HCT116 (cell line): ENCODE measurements at regions of chr1 and their contacts with region 1.

Region 1: DNA sequence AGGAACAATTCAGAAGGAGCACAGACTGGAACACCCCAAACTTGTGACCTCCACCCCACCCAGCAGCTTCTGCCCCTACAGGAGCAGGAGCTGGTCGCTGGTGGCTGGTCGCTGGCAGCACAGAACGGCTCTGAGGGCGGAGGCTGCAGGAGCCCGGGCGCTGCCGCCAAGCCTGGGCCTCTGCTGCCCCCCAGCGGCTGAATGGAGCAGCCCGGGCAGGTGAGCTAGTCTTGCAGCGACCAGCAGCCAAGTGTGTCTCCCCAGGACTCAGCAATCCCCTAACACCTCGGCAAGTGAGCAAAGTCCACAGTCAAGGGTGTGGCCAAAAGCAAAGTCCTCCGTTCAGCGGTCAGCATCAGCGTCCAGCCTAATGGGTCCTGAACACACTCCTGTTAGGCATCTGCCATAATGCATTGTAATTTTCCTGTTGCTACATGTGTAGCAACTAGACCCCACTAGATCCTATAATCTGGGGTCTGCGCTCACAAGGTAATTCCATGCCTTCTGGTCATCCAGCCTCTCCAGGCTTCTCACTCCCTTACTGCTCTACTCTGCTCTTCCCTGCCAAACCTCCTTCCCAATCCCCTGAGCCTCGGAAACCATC is 12.1 kb upstream of the GJB5 start:
- DNase-seq: peak; percentile 59
- ATAC-seq: peak; percentile 99
- H3K4me3 ChIP-seq: no peak overlapping the region
- H3K27ac ChIP-seq: no peak overlapping the region
- H3K4me1 ChIP-seq: peaks cover 3 to 13% of the 10 kb centered on the region in 2 experiments; a peak in 3 of 4 replicates
- H3K27me3 ChIP-seq: no peaks in the 10 kb centered on the region
- CTCF ChIP-seq: peak; percentile 88 to 96 (median 94)
- POLR2A ChIP-seq: no peak
- RAD21 ChIP-seq: peak; percentile 99

Region 2: DNA sequence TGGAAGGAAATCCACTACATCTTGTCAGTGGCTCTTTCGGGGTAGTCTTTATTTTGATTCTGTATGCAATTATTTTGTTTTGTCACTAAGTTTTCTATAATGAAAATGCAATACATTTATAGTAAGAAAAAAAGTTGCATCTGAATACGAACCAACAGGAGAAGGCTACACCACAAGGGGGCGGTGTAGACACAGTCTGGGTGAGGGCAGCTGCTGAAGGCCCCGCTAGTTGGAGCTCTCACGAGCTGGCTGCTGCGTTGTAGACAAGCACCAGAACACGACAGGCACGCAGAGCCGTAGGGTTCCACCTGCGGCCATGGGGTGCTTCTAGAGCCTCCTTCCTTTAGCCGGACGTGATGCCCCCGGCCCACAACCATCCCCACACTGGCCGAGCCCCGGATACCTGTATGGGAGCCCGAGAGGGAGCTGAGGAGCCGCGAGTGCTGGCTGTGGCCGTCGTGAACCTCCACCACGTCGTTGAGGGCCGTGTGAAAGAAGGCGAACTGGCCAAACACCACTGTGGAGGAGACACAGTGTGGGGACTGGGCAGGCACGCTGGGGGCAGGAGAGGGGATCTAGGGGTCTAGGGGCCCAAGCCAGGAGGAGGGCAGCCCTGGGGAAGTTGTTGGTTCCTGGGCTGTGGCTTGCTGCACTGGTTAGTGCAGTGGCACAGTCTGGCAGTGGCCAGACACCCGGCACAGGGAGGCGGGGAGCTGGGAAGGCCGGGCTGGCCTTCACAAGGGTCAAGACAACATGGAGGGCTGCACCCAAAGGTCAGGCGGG is 1109.6 kb before region 1 on chr1:
- CTCF ChIA-PET with region 1: interaction called, 14 read pairs
- POLR2A ChIA-PET with region 1: no interaction called
- RAD21 ChIA-PET with region 1: no interaction called
- intact Hi-C with region 1: loop called (anchors 5 kb)
- DNase-seq: peak; percentile 82
- ATAC-seq: peak; percentile 85
- H3K4me3 ChIP-seq: no peak overlapping the region
- H3K27ac ChIP-seq: no peak overlapping the region
- H3K4me1 ChIP-seq: peaks cover 0 to 12% of the 10 kb centered on the region in 2 experiments; a peak in 2 of 4 replicates
- H3K27me3 ChIP-seq: 0 out of 2 replicates have a peak, but pooled peaks cover 5% of the 10 kb centered on the region
- CTCF ChIP-seq: peak; percentile 99 to 100 (median 100)
- POLR2A ChIP-seq: no peak
- RAD21 ChIP-seq: peak; percentile 67

Region 3: DNA sequence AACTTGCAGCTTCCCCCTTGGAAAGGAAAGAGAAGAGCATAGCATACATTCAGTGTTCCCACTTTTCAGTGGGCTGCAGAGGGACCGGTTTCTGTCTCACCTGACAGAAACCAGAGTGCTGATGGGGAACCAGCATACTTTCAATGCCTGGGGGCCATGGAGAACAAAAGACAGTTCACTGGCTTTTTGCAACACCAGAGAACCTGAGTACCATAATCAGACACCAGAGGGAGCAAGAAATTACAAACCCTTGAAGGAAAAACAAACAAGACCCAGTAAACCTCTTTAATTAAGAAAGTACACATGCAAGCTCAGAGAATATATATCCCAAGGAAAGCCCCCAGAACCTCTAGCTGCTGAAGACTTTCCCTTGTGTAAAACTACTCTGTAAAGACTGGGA is 628.9 kb before region 1 on chr1:
- CTCF ChIA-PET with region 1: interaction called, 12 read pairs
- POLR2A ChIA-PET with region 1: no interaction called
- RAD21 ChIA-PET with region 1: no interaction called
- intact Hi-C with region 1: loop called (anchors 1 kb)
- DNase-seq: peak; percentile 32
- ATAC-seq: peak; percentile 58; the same call in 1 of the 2 replicates
- H3K4me3 ChIP-seq: no peak overlapping the region
- H3K27ac ChIP-seq: no peak overlapping the region
- H3K4me1 ChIP-seq: no peaks in the 10 kb centered on the region
- H3K27me3 ChIP-seq: peaks cover 6% of the 10 kb centered on the region; the same call in 1 of the 2 replicates
- CTCF ChIP-seq: peak; percentile 43 to 56 (median 52); a peak in 5 of 6 replicates
- POLR2A ChIP-seq: no peak
- RAD21 ChIP-seq: peak; percentile 44; the same call in 1 of the 2 replicates

Region 4: DNA sequence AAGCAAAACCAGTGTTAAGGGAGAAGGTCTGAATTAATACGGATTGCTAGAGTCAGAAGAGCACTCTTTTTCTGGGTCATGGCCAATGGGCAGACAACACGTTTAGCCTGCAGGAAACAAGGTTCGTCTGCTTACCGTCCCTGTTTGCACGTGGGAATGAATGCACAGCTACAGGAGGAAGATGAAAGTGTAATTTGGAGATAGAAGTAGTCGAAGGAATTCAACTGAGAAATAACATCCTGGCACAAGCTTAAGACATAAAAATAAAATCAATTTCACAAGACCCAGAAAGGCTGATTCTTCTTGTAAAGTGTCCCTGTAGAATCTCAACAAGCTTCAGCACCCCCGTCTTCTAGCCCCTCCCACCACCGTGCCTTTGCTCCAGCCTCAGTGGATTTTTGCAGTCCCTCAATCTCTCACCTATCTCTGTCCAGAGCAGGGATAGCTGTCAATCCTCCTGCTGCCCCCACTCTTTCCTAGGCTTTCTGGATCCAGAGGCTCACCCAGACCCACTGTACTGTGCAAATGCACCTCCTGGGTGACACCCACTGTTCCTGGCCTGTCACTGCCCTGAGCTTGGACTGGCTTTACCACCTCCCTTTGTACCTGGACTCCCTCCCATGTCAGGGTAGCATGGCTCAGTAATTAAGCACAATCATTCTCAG is 505.5 kb before region 1 on chr1:
- CTCF ChIA-PET with region 1: no interaction called
- POLR2A ChIA-PET with region 1: no interaction called
- RAD21 ChIA-PET with region 1: no interaction called
- intact Hi-C with region 1: no loop called
- DNase-seq: no peak
- ATAC-seq: no peak
- H3K4me3 ChIP-seq: no peak overlapping the region
- H3K27ac ChIP-seq: no peak overlapping the region
- H3K4me1 ChIP-seq: no peaks in the 10 kb centered on the region
- H3K27me3 ChIP-seq: peaks cover 13% of the 10 kb centered on the region
- CTCF ChIP-seq: no peak
- POLR2A ChIP-seq: no peak
- RAD21 ChIP-seq: no peak

Region 5: GRCh38 chr1:34342334-34342733 is 400.4 kb before region 1 on chr1:
- CTCF ChIA-PET with region 1: no interaction called
- POLR2A ChIA-PET with region 1: no interaction called
- RAD21 ChIA-PET with region 1: no interaction called
- intact Hi-C with region 1: no loop called
- DNase-seq: no peak
- ATAC-seq: no peak
- H3K4me3 ChIP-seq: no peak overlapping the region
- H3K27ac ChIP-seq: no peak overlapping the region
- H3K4me1 ChIP-seq: no peaks in the 10 kb centered on the region
- H3K27me3 ChIP-seq: peaks cover 28% of the 10 kb centered on the region
- CTCF ChIP-seq: peak in 2 of 3 experiments; percentile 15 to 21; a peak in 1 of 6 replicates
- POLR2A ChIP-seq: no peak
- RAD21 ChIP-seq: peak; percentile 14; the same call in 1 of the 2 replicates

Region 6: GRCh38 chr1:34597877-34598514 is 144.8 kb before region 1 on chr1:
- CTCF ChIA-PET with region 1: interaction called, 6 read pairs
- POLR2A ChIA-PET with region 1: no interaction called
- RAD21 ChIA-PET with region 1: interaction called in 1 of 2 experiments, 4 read pairs
- intact Hi-C with region 1: loop called (anchors 2 kb)
- DNase-seq: peak; percentile 50
- ATAC-seq: peak; percentile 98
- H3K4me3 ChIP-seq: no peak overlapping the region
- H3K27ac ChIP-seq: no peak overlapping the region
- H3K4me1 ChIP-seq: no peaks in the 10 kb centered on the region
- H3K27me3 ChIP-seq: peaks cover 28% of the 10 kb centered on the region
- CTCF ChIP-seq: peak; percentile 76 to 98 (median 94)
- POLR2A ChIP-seq: no peak
- RAD21 ChIP-seq: peak; percentile 90

Region 7: DNA sequence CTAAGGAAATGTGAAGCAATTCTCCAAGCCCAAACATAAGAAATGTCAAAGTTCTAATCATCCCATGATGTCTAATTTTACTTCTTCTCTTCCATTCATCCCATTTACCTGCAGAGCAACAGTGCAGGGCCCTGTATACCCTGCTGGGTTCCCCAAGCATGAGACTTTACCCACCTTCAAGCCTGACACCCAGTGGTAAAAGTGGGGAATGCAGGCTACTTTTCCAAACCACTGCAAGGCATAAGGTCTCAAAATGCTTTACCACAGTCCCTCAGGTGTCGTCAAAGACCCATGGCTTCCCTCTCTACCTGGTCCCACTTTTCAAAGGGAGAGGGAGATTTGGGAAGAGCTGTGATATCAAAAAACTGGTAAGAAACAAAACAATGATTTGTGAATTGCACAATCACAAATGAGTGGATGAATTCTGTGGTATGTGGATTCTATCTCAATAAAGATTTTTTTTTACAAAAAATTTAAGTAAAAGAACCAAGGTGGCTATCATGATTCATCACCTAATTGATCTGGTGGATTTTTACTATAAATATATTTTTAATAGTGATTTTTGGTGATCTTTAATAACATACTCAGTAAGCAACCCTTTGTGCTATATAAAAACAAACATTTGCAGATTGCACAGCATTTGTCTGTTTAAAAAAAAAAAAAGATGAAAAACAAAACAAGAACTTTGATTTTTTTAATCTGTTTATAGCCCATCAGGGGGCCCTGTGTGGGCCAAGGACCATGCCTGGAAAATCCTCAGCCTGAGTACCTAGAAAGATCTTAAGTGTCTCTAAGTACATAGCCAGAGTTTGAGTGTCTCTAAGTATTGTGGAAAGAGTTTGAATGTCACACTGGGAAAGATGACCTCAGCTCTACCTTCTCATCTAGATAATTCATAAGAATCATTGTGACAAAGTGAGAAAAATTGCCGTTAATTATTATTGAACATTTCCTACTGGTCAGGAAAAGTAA is 61.0 kb before region 1 on chr1:
- CTCF ChIA-PET with region 1: interaction called, 4 read pairs
- POLR2A ChIA-PET with region 1: no interaction called
- RAD21 ChIA-PET with region 1: no interaction called
- intact Hi-C with region 1: loop called (anchors 5 kb)
- DNase-seq: peak; percentile 52
- ATAC-seq: peak; percentile 99
- H3K4me3 ChIP-seq: no peak overlapping the region
- H3K27ac ChIP-seq: no peak overlapping the region
- H3K4me1 ChIP-seq: no peaks in the 10 kb centered on the region
- H3K27me3 ChIP-seq: peaks cover 28% of the 10 kb centered on the region
- CTCF ChIP-seq: peak; percentile 67 to 91 (median 85); a peak in 5 of 6 replicates
- POLR2A ChIP-seq: no peak
- RAD21 ChIP-seq: peak; percentile 68

Region 8: DNA sequence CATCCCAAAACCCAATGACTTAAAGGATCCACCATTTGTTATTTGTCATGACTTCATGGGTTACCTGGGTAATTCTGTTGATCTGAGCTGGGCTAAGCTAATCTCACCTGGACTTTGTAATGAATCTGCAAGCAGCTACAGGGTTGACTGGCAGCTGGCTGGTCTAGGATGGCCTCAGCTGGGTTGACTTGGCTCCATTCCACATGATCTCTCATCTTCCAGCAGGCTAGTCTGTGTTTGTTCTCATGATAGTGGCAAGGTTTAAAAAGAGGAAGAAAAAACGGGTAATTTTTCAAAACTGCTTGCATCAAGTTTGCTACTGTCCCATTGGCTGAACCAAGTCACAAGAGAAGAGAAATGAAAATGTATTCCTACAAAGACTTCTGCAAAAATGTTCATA is 500.9 kb after region 1 on chr1:
- CTCF ChIA-PET with region 1: no interaction called
- POLR2A ChIA-PET with region 1: no interaction called
- RAD21 ChIA-PET with region 1: no interaction called
- intact Hi-C with region 1: no loop called
- DNase-seq: no peak
- ATAC-seq: no peak
- H3K4me3 ChIP-seq: no peak overlapping the region
- H3K27ac ChIP-seq: no peak overlapping the region
- H3K4me1 ChIP-seq: no peaks in the 10 kb centered on the region
- H3K27me3 ChIP-seq: no peaks in the 10 kb centered on the region
- CTCF ChIP-seq: no peak
- POLR2A ChIP-seq: no peak
- RAD21 ChIP-seq: no peak